ENCODE measurements at regions of chr7 and their contacts with region 1.

Region 1: GRCh38 chr7:53904355-53904754 is 637.8 kb upstream of the VSTM2A start:
- DNase-seq: no peak
- ATAC-seq: no peak

Region 2: DNA sequence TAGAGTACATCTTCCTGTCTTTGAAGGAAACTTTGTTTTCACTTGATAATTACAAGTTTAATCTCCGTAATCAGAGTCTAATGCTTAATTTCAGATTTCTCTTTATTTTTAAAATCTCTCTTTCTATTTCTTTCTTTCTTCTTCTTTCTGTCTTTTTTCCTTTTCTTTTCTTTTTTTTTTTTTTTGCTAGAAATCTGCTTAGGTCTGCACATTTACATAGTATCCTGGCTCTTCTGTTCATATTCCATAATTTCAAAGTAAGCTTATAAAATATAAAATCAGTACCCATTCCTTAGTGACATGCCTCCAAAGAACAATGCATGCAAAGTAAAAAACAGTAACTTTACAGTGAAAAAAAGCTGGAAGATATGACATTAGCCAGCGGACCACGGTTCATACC is 36.1 kb after region 1 on chr7:
- intact Hi-C with region 1: loop called (anchors 1 kb)
- DNase-seq: no peak
- ATAC-seq: no peak

Measured in sciatic nerve (tissue), 2 donors.